ENCODE measurements at regions of chr7 and their contacts with region 1.

Region 1: GRCh38 chr7:85041605-85042216 is 145.1 kb downstream of the SEMA3D start:
- DNase-seq: peak; percentile 39
- H3K4me3 ChIP-seq: no peak overlapping the region
- H3K27ac ChIP-seq: no peak overlapping the region
- H3K4me1 ChIP-seq: no peaks in the 10 kb centered on the region
- CTCF ChIP-seq: peak; percentile 86

Region 2: DNA sequence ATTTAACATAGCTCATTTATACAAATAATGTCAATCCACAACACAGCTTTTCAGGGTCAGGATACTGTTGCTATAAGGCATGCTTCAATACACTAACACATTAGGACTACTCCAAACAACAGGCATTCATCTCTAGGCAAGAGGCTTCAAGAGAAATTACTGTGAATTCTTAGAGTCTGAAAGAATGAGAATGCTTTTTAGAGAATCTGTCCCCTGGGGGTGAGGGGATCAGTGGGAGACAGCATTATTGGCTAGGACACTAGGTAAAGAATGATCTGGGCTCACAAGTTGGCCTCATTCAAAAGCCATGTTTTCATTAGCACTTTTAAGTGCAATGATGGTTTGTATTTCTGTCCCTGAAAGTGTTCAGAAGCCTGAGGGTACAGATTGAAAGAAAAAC is 12.6 kb after region 1 on chr7:
- CTCF ChIA-PET with region 1: no interaction called
- POLR2A ChIA-PET with region 1: no interaction called
- intact Hi-C with region 1: no loop called
- DNase-seq: no peak
- H3K4me3 ChIP-seq: no peak overlapping the region
- H3K27ac ChIP-seq: no peak overlapping the region
- H3K4me1 ChIP-seq: no peaks in the 10 kb centered on the region
- CTCF ChIP-seq: no peak

Region 3: GRCh38 chr7:85464042-85464651 is 422.4 kb after region 1 on chr7:
- CTCF ChIA-PET with region 1: no interaction called
- POLR2A ChIA-PET with region 1: no interaction called
- intact Hi-C with region 1: loop called (anchors 5 kb)
- DNase-seq: peak; percentile 2
- H3K4me3 ChIP-seq: no peak overlapping the region
- H3K27ac ChIP-seq: no peak overlapping the region
- H3K4me1 ChIP-seq: no peaks in the 10 kb centered on the region
- CTCF ChIP-seq: peak; percentile 66; the same call in 1 of the 2 replicates

Region 4: DNA sequence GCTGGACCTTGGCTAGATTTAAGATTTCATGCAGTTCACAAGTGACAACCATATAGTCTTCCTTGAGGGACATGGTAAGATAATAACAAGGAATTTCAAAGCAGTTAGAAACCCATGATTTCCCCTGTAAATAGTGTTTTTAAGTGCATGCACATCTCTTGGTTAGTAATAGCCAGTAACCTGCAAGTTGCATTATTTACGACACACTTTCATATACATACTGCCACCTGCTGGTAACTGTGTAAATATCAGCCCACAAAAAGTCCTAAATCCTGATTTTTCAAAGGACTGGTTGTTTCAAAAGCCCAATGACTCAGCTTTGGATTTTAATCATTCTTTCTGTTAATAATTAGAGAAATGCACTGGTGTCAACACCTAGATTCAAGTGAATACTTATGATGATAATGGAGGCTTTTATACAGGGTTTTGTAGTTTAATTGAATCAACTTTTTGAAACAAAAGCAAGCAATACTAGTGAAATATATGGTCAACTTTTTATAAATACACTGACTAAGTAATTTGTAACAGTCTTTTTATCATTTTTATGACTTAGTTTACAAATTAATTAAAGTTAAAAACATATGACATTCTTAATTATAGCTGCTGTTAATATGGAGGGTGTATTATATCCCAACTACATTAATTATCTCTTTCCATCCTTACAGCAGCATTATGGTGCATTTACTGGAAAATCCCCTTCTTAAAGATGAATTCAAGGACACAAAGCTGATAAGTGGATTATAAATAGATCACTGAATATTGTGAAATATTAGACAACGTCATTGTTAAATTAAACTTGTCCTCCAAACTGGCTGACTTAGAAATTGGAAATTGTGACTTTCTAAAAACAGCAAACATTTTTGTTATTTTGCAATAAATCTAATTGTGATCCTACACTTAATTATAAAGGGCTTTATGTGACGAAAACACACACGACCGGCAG is 512.8 kb after region 1 on chr7:
- CTCF ChIA-PET with region 1: no interaction called
- POLR2A ChIA-PET with region 1: no interaction called
- intact Hi-C with region 1: loop called (anchors 2 kb)
- DNase-seq: peak; percentile 61
- H3K4me3 ChIP-seq: no peak overlapping the region
- H3K27ac ChIP-seq: no peak overlapping the region
- H3K4me1 ChIP-seq: no peaks in the 10 kb centered on the region
- CTCF ChIP-seq: peak; percentile 87

Region 5: GRCh38 chr7:85851571-85852193 is 810.0 kb after region 1 on chr7:
- CTCF ChIA-PET with region 1: no interaction called
- POLR2A ChIA-PET with region 1: no interaction called
- intact Hi-C with region 1: loop called (anchors 10 kb)
- DNase-seq: peak; percentile 21
- H3K4me3 ChIP-seq: no peak overlapping the region
- H3K27ac ChIP-seq: no peak overlapping the region
- H3K4me1 ChIP-seq: no peaks in the 10 kb centered on the region
- CTCF ChIP-seq: peak; percentile 73